Transverse colon (tissue), 4 donors: ENCODE measurements at regions of chr2 and their contacts with region 1.

Region 1: GRCh38 chr2:225842945-225843344 is 443.4 kb downstream of the NYAP2 start:
- DNase-seq: no peak
- H3K4me3 ChIP-seq: no peak overlapping the region
- H3K27ac ChIP-seq: no peak overlapping the region
- H3K4me1 ChIP-seq: no peaks in the 10 kb centered on the region
- H3K27me3 ChIP-seq: no peaks in the 10 kb centered on the region
- CTCF ChIP-seq: no peak
- EP300 ChIP-seq: no peak
- POLR2A ChIP-seq: no peak

Region 2: DNA sequence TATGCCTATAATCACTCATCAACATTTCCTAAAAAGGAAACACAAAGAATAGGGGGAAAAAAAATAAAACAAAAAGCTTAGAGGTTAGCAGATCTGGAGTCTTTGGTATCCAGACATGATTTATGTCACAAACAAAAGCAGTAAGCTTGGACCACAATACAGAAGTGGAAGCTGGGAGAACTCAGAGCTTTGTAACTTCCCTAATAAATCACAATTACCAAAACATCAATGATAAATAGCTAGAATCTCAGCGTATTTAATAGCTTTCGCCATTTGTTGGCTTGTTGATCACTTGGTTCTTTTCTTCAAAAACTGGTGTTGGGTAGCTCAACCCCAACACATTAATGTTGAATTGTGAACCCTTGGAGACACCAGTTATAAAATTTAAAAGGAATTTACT is 564.2 kb after region 1 on chr2:
- in situ Hi-C with region 1: no loop called
- intact Hi-C with region 1: loop called (anchors 5 kb)
- DNase-seq: no peak
- H3K4me3 ChIP-seq: no peak overlapping the region
- H3K27ac ChIP-seq: no peak overlapping the region
- H3K4me1 ChIP-seq: peaks cover 0 to 7% (median 0%) of the 10 kb centered on the region in 4 donors
- H3K27me3 ChIP-seq: no peaks in the 10 kb centered on the region
- CTCF ChIP-seq: no peak
- EP300 ChIP-seq: no peak
- POLR2A ChIP-seq: no peak